Activated CD8-positive, alpha-beta T cell treated with anti-CD3 and anti-CD28 coated beads, Interleukin-2, amount 10 ng/mL, durations not matched to agents 7 days and 5 days (primary cell): ENCODE measurements at regions of chr5 and their contacts with region 1.

Region 1: DNA sequence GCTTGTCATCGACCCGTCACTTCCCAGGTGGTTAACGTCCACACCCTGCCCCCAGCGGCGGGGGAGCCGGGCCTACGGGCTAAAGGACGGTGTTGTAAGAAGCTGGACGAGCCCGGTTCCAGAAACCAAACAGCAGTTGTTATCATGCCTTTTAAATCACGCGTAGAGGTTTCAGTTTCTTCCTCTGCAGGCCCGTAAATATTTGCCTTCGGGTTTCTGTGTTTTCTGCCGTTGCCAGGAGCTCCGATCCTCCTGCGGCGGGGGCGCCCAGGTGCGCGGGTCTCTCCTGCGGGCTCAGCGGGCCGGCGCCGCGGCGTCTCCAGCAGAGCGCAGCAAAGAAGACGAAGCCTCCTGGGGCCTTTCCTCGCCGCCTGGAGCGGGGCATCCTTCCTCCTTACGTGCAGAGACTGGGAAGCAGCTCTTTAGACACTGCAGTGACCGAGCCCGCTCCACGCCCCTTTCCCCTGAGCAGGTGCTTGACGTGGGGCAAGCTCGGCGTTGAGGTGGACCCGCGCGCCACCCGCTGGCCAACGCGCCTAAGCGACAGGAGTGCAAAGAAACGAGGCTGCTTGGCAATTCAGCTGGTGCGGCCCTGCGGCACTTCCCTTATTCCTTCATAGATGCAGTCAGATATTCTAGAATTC is 21.8 kb upstream of the TTC1 start:
- DNase-seq: peak; percentile 80
- ATAC-seq: peak; percentile 98
- H3K4me3 Mint-ChIP-seq: peak overlapping the region; percentile 49
- H3K27ac Mint-ChIP-seq: no peak overlapping the region
- H3K4me1 Mint-ChIP-seq: peaks cover 5% of the 10 kb centered on the region
- H3K27me3 Mint-ChIP-seq: peaks cover 46% of the 10 kb centered on the region

Region 2: DNA sequence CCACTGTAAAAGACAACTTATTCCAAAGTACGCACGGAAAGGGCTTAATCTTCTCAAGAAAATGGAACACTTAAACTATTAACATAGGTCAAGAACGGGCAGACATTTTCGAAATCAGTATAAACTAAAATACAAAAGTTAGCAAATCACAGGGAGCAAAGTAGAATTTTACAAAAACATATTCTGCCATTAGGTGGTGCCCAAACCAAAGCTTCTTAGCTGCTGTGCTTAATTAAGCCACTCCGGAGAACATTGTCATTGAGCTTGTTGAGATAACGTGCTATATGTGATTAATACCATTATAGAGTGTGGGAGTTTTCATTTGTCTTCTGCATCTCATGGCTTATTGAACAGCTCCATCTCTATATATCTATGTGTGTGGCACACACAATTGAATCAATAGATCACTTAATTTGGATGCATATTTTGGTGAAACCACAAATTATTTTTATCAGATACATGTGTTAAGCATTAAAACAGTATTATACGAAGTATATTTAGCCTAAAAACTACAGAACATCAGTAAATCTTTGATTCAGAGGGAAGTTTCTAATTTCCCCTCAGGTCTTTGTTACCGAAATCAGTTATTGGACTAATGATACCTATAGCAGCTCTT is 700.6 kb before region 1 on chr5:
- CTCF ChIA-PET with region 1: interaction called, 24 read pairs
- POLR2A ChIA-PET with region 1: no interaction called
- DNase-seq: peak; percentile 30
- ATAC-seq: peak; percentile 49
- H3K4me3 Mint-ChIP-seq: no peak overlapping the region
- H3K27ac Mint-ChIP-seq: no peak overlapping the region
- H3K4me1 Mint-ChIP-seq: peaks cover 3% of the 10 kb centered on the region
- H3K27me3 Mint-ChIP-seq: no peaks in the 10 kb centered on the region

Region 3: DNA sequence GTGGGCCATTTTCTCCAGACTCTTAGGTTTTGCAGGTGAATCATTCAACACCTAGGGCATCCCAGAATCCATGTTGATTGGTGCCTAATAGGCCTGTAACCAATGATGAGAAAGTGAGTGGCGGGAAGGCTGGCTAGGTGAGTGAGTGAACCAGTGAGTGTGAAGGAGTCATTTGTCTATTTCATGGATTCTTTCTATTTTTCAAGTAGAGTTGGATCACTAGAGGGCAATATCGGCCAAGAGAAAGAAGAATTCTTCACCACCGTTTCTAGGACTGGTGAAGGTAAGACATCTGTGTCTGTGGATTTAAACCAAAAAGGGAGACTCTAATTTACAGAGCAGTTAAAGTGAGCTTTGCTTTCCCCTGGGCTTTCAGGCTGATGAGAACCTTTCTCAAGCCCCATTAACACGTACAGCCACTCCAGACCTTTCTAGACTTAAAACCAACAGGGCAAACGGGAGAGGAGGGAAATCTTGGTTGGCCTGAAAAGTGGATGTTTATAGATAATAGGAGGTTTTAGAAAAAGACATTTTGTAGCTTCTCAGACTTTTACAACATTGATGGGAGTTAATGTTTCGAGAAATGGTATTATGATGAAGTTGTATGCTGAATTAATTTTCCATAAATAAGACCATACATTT is 542.6 kb before region 1 on chr5:
- CTCF ChIA-PET with region 1: interaction called, 19 read pairs
- POLR2A ChIA-PET with region 1: no interaction called
- DNase-seq: no peak
- ATAC-seq: no peak
- H3K4me3 Mint-ChIP-seq: no peak overlapping the region
- H3K27ac Mint-ChIP-seq: no peak overlapping the region
- H3K4me1 Mint-ChIP-seq: peaks cover 2% of the 10 kb centered on the region
- H3K27me3 Mint-ChIP-seq: peaks cover 30% of the 10 kb centered on the region

Region 4: DNA sequence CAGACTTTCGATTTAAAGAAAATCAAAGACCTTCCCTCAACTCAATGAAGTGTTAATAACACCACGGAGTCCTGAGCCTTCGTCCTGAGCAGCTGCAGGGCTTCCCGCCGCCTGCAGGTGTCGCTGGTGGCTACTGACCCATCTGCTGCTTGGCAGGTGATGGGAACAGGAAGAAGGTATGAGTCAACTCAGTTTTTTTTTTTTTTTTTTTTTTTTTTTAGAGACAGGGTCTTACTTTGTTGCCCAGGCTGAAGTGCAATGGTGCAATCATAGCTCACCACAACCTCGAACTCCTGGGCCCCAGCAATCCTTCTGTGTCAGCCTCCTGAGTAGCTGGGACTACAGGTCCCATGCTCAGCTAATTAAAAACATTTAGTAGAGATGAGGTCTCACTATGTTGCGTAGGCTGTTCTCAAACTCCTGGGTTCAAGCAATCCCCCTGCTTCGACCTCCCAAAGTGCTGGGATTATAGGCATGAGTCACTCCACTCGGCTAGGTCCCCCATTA is 471.2 kb before region 1 on chr5:
- CTCF ChIA-PET with region 1: interaction called, 17 read pairs
- POLR2A ChIA-PET with region 1: no interaction called
- DNase-seq: peak; percentile 80
- ATAC-seq: peak; percentile 84
- H3K4me3 Mint-ChIP-seq: no peak overlapping the region
- H3K27ac Mint-ChIP-seq: no peak overlapping the region
- H3K4me1 Mint-ChIP-seq: peaks cover 3% of the 10 kb centered on the region
- H3K27me3 Mint-ChIP-seq: peaks cover 8% of the 10 kb centered on the region

Region 5: GRCh38 chr5:159712672-159713071 is 274.5 kb before region 1 on chr5:
- CTCF ChIA-PET with region 1: no interaction called
- POLR2A ChIA-PET with region 1: no interaction called
- DNase-seq: no peak
- ATAC-seq: no peak
- H3K4me3 Mint-ChIP-seq: no peak overlapping the region
- H3K27ac Mint-ChIP-seq: no peak overlapping the region
- H3K4me1 Mint-ChIP-seq: no peaks in the 10 kb centered on the region
- H3K27me3 Mint-ChIP-seq: peaks cover 10% of the 10 kb centered on the region

Region 6: GRCh38 chr5:160008877-160009590 is 21.9 kb after region 1 on chr5 and contains the start of gene TTC1:
- CTCF ChIA-PET with region 1: interaction called, 14 read pairs
- POLR2A ChIA-PET with region 1: no interaction called
- DNase-seq: peak; percentile 97
- ATAC-seq: peak; percentile 99
- H3K4me3 Mint-ChIP-seq: peak within 1 kb of the TSS; percentile 94
- H3K27ac Mint-ChIP-seq: peak within 1 kb of the TSS; percentile 97
- H3K4me1 Mint-ChIP-seq: peaks cover 22% of the 10 kb centered on the region
- H3K27me3 Mint-ChIP-seq: no peaks in the 10 kb centered on the region
- total RNA-seq, gene TTC1: 50.1 to 51.6 TPM

Region 7: DNA sequence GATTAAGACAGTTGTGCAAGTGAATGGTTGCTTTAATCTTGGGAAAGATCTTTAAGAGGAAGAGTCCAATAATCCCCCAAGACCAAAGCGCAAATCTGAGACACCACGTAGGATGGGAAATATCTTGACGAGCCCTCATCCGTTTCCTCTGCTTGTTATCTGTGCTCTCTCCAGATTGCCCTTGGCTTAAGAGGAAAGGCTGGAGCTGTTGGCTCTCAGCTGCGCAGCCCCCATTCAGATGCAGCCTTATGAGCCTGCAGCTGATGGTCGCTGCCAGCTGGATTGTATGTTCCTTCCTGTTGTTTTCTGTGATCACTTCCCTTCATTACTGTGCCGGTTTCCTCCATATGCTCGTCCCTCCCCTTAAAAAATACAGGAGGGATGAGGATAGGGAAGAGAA is 84.4 kb after region 1 on chr5:
- CTCF ChIA-PET with region 1: no interaction called
- POLR2A ChIA-PET with region 1: no interaction called
- DNase-seq: no peak
- ATAC-seq: no peak
- H3K4me3 Mint-ChIP-seq: no peak overlapping the region
- H3K27ac Mint-ChIP-seq: no peak overlapping the region
- H3K4me1 Mint-ChIP-seq: peaks cover 2% of the 10 kb centered on the region
- H3K27me3 Mint-ChIP-seq: no peaks in the 10 kb centered on the region